Panc1 (cell line): ENCODE measurements at regions of chr2 and their contacts with region 1.

Region 1: GRCh38 chr2:213151437-213152064 is at the start of gene IKZF2:
- DNase-seq: no peak
- ATAC-seq: peak; percentile 95
- H3K4me3 ChIP-seq: peak within 1 kb of the TSS; percentile 66 to 69
- H3K27ac ChIP-seq: peak within 1 kb of the TSS; percentile 61; the same call in 1 of the 2 replicates
- H3K4me1 ChIP-seq: peaks cover 9% of the 10 kb centered on the region
- H3K27me3 ChIP-seq: peaks cover 27% of the 10 kb centered on the region
- CTCF ChIP-seq: no peak
- total RNA-seq, gene IKZF2: 0.44 TPM

Region 2: GRCh38 chr2:212595037-212595654 is 556.4 kb before region 1 on chr2:
- CTCF ChIA-PET with region 1: no interaction called
- POLR2A ChIA-PET with region 1: no interaction called
- in situ Hi-C with region 1: no loop called
- intact Hi-C with region 1: loop called (anchors 10 kb)
- DNase-seq: peak; percentile 20
- ATAC-seq: 0 out of 2 replicates have a peak, but pooled peaks have one; percentile 51
- H3K4me3 ChIP-seq: no peak overlapping the region
- H3K27ac ChIP-seq: no peak overlapping the region
- H3K4me1 ChIP-seq: no peaks in the 10 kb centered on the region
- H3K27me3 ChIP-seq: no peaks in the 10 kb centered on the region
- CTCF ChIP-seq: peak; percentile 46; the same call in 1 of the 2 replicates

Region 3: DNA sequence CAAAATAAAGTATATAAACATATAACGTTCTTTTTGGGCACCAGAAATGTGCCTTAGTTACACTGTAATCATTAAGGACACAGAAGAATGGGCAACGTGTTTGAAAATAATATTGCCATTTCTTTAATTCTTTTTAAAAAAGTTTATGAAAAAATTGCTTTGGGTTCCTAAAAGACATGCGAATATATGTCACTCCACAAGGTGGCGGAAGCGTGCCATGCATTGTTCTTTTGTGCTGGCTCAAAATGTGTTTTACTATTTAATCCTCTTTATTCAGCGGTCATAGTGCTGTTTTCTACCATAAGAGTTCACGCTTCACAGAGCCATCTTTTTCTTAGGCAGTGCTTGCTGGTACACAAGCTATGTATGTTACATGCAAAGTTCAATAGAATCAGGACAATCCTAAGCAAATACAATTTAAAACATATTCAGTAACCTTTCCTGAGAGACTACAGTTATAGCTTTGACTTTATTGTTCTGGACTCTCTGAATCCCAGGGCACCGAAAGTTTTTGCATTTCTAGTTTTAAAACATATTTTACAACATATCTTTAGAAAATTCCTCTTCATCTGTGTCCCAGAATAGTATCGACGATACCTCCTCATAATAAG is 465.2 kb before region 1 on chr2:
- CTCF ChIA-PET with region 1: interaction called, 9 read pairs
- POLR2A ChIA-PET with region 1: no interaction called
- in situ Hi-C with region 1: no loop called
- intact Hi-C with region 1: loop called (anchors 1 kb)
- DNase-seq: peak; percentile 33
- ATAC-seq: no peak
- H3K4me3 ChIP-seq: no peak overlapping the region
- H3K27ac ChIP-seq: no peak overlapping the region
- H3K4me1 ChIP-seq: no peaks in the 10 kb centered on the region
- H3K27me3 ChIP-seq: no peaks in the 10 kb centered on the region
- CTCF ChIP-seq: peak; percentile 85; the same call in 1 of the 2 replicates

Region 4: DNA sequence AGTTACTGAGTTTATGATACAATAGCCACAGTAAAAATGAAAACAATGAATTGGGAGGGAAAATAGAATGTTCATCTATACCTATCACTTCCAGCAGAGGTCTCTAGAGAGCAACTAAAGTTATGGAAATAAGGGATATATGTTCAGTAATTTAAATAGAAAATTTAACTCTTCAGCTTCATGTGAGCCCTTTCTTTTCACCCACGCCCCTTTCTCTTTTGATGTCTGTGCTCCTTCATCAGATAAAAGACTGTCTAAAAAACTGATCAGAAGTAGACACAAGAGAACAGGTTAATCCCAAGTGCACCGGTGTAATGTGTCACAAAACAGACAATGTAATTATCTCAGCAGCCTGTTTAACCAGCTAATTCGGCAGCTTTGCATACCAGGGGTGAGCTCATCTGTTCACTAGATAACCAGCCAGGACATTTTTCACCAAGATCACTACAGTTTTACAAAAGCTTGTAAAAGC is 374.5 kb before region 1 on chr2:
- CTCF ChIA-PET with region 1: no interaction called
- POLR2A ChIA-PET with region 1: no interaction called
- in situ Hi-C with region 1: no loop called
- intact Hi-C with region 1: loop called (anchors 2 kb)
- DNase-seq: no peak
- ATAC-seq: no peak
- H3K4me3 ChIP-seq: no peak overlapping the region
- H3K27ac ChIP-seq: no peak overlapping the region
- H3K4me1 ChIP-seq: no peaks in the 10 kb centered on the region
- H3K27me3 ChIP-seq: no peaks in the 10 kb centered on the region
- CTCF ChIP-seq: peak; percentile 66

Region 5: DNA sequence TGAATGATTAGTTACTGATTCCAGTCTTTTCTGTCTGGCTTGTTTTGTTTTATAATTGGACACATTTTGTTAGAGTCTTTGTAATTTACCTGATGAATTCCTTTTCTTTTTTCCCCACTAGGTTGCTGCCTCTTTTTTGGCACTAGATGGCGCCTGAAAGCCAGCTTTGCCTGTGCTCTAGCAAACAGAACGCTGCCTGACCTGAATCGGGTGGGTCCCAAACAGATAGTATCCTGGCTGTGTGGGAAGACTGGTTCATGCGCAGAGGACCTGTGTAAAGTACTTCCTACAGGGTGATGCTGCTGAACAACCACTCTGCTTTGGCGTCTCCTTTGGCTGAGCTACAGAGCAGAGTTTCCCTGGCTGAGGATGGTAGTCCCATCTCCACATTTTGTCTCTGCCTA is 288.4 kb before region 1 on chr2:
- CTCF ChIA-PET with region 1: no interaction called
- POLR2A ChIA-PET with region 1: no interaction called
- in situ Hi-C with region 1: no loop called
- intact Hi-C with region 1: loop called (anchors 2 kb)
- DNase-seq: no peak
- ATAC-seq: no peak
- H3K4me3 ChIP-seq: no peak overlapping the region
- H3K27ac ChIP-seq: no peak overlapping the region
- H3K4me1 ChIP-seq: no peaks in the 10 kb centered on the region
- H3K27me3 ChIP-seq: no peaks in the 10 kb centered on the region
- CTCF ChIP-seq: peak; percentile 62